ENCODE measurements at regions of chr1 and their contacts with region 1.

Region 1: GRCh38 chr1:84620720-84621313 is 46.6 kb upstream of the CTBS start:
- DNase-seq: peak; percentile 91
- ATAC-seq: peak; percentile 90
- H3K4me3 Mint-ChIP-seq: peak overlapping the region; percentile 80
- H3K27ac Mint-ChIP-seq: peak overlapping the region; percentile 91
- H3K4me1 Mint-ChIP-seq: peaks cover 20% of the 10 kb centered on the region
- H3K27me3 Mint-ChIP-seq: no peaks in the 10 kb centered on the region

Region 2: GRCh38 chr1:83931658-83932253 is 689.1 kb before region 1 on chr1:
- CTCF ChIA-PET with region 1: no interaction called
- POLR2A ChIA-PET with region 1: no interaction called
- intact Hi-C with region 1: loop called in 1 of 2 experiments (anchors 10 kb)
- DNase-seq: peak; percentile 11
- ATAC-seq: peak; percentile 58
- H3K4me3 Mint-ChIP-seq: no peak overlapping the region
- H3K27ac Mint-ChIP-seq: no peak overlapping the region
- H3K4me1 Mint-ChIP-seq: no peaks in the 10 kb centered on the region
- H3K27me3 Mint-ChIP-seq: no peaks in the 10 kb centered on the region

Region 3: GRCh38 chr1:84048820-84049219 is 572.0 kb before region 1 on chr1:
- CTCF ChIA-PET with region 1: no interaction called
- POLR2A ChIA-PET with region 1: no interaction called
- intact Hi-C with region 1: no loop called
- DNase-seq: no peak
- ATAC-seq: no peak
- H3K4me3 Mint-ChIP-seq: no peak overlapping the region
- H3K27ac Mint-ChIP-seq: no peak overlapping the region
- H3K4me1 Mint-ChIP-seq: no peaks in the 10 kb centered on the region
- H3K27me3 Mint-ChIP-seq: peaks cover 4% of the 10 kb centered on the region

Region 4: GRCh38 chr1:84344286-84344685 is 276.5 kb before region 1 on chr1:
- CTCF ChIA-PET with region 1: no interaction called
- POLR2A ChIA-PET with region 1: no interaction called
- intact Hi-C with region 1: no loop called
- DNase-seq: no peak
- ATAC-seq: no peak
- H3K4me3 Mint-ChIP-seq: no peak overlapping the region
- H3K27ac Mint-ChIP-seq: no peak overlapping the region
- H3K4me1 Mint-ChIP-seq: no peaks in the 10 kb centered on the region
- H3K27me3 Mint-ChIP-seq: peaks cover 5% of the 10 kb centered on the region

Region 5: DNA sequence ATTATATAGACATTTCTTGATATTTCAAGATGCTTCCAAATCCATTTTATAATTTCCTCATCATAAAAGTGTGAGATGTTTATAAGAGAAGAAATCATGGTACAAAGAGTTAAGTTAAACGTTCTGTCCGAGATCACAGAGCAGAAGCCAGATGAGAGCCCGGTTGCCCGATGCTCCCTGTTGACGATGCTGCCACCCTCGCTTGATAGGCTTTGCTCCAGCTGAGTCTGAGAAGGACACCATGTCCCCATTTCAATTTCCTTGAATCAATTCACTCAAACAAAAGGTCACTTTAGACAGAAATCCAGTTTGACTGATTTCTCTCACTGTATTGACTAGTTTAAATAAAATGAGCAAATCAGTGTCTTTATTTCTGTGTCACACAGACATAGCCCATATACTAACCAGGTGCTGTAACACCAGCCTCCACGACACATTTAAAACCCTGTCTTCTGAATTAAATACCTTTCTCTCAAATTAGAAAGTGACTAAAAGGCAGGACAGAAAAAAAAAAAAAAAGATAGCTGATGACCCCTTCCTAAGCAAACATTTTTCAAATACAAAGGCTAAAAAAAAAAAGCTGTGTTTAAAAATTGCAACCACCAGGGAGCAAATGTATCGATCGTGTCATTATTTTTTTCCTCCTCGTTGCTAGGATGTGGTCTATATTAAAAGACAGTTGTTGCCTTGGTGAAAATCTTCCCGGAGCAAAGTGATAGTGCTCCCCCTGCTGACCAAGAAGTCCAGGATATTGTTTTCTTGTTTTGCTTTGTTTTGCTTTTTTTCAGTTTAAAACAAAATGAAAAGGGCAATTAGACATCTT is 187.3 kb before region 1 on chr1:
- CTCF ChIA-PET with region 1: interaction called, 15 read pairs
- POLR2A ChIA-PET with region 1: interaction called, 4 read pairs
- intact Hi-C with region 1: loop called in 1 of 2 experiments (anchors 2 kb)
- DNase-seq: peak; percentile 65
- ATAC-seq: peak; percentile 76
- H3K4me3 Mint-ChIP-seq: peak overlapping the region; percentile 48
- H3K27ac Mint-ChIP-seq: peak overlapping the region; percentile 32
- H3K4me1 Mint-ChIP-seq: peaks cover 18% of the 10 kb centered on the region
- H3K27me3 Mint-ChIP-seq: no peaks in the 10 kb centered on the region

Region 6: GRCh38 chr1:84478876-84479868 is 141.6 kb before region 1 on chr1 and contains the start of gene RPF1:
- CTCF ChIA-PET with region 1: interaction called, 11 read pairs
- POLR2A ChIA-PET with region 1: no interaction called
- intact Hi-C with region 1: loop called (anchors 1 kb)
- DNase-seq: peak; percentile 86
- ATAC-seq: peak; percentile 92
- H3K4me3 Mint-ChIP-seq: peak within 1 kb of the TSS; percentile 92
- H3K27ac Mint-ChIP-seq: peak within 1 kb of the TSS; percentile 98
- H3K4me1 Mint-ChIP-seq: peaks cover 40% of the 10 kb centered on the region
- H3K27me3 Mint-ChIP-seq: peaks cover 17% of the 10 kb centered on the region
- total RNA-seq, gene RPF1: 59.1 to 70.2 TPM

Region 7: DNA sequence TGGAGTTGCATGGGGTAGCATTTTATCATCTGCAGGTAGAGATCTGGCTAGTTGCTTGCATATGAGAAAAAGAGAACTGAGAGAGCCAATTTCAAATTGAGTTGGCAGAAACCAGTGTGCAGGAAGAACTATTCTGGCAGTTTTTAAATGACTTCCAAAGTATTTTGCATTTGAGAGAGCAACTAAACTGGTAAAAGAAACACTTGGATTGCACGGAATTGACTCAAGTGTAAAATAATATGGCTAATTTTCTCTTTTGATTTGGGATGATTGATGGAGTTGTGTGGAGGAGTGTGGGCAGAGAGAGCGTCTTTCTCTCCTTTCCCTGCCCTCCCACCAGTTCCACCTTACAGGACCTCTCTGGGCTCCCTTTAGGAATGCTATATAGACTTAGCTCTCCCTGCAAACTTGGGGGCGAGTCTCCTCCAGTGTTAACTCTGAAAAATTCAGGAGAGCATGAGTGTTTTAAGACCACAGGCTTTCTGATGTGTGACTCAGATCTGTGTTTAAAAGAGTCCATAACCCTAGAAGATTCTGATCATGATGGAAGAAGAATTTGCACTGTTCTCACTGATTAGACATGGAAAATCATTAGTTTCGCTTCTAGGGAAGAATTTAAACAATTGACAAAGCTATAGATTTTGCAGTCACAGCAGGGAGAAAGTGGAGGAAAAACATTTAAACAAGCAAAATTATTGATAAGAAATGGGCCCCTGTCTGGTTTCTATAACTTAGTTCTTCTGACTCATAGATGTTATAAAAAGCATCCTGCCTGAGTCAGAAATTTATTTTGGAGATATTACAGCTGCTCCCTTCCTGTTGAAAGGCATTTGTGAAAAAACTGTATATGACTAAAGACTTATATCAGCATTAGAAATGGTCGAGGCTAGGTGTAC is 21.7 kb before region 1 on chr1:
- CTCF ChIA-PET with region 1: no interaction called
- POLR2A ChIA-PET with region 1: no interaction called
- intact Hi-C with region 1: loop called (anchors 1 kb)
- DNase-seq: no peak
- ATAC-seq: peak; percentile 88
- H3K4me3 Mint-ChIP-seq: peak overlapping the region; percentile 30
- H3K27ac Mint-ChIP-seq: peak overlapping the region; percentile 86
- H3K4me1 Mint-ChIP-seq: peaks cover 32% of the 10 kb centered on the region
- H3K27me3 Mint-ChIP-seq: no peaks in the 10 kb centered on the region

Region 8: DNA sequence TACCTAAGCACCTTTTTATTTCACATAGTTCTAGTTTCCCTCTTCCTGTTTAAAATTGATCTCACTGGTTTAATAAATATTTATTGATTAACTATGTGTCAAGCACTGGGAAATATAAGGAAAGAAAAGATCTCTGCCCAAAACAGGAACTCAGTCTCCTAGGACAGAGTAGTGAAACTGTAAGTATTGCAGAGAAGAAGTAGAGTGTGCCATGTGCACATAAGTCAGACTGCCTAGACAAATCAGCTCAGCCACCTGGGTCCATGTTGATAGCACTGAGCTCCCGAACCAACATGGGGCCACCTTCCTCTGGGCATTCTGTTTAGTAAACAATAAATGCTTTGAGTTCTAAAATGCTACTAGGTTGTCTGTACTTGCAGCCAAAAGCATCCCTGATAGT is 79.3 kb after region 1 on chr1:
- CTCF ChIA-PET with region 1: no interaction called
- POLR2A ChIA-PET with region 1: no interaction called
- intact Hi-C with region 1: no loop called
- DNase-seq: no peak
- ATAC-seq: peak; percentile 16
- H3K4me3 Mint-ChIP-seq: no peak overlapping the region
- H3K27ac Mint-ChIP-seq: no peak overlapping the region
- H3K4me1 Mint-ChIP-seq: peaks cover 15% of the 10 kb centered on the region
- H3K27me3 Mint-ChIP-seq: no peaks in the 10 kb centered on the region

Measured in activated CD4-positive, alpha-beta T cell treated with anti-CD3 and anti-CD28 coated beads for 36 hours (primary cell).